ENCODE measurements at regions of chr5 and their contacts with region 1.

Region 1: GRCh38 chr5:68331192-68332079 is 115.9 kb downstream of the PIK3R1 start:
- DNase-seq: peak; percentile 93 to 98 (median 96)
- H3K4me3 ChIP-seq: peak overlapping the region in 2 of 3 experiments; percentile 5 to 50
- H3K4me3 Mint-ChIP-seq: peak overlapping the region; percentile 54 to 82
- H3K27ac ChIP-seq: peak overlapping the region; percentile 86 to 99
- H3K27ac Mint-ChIP-seq: peak overlapping the region; percentile 96 to 99 (median 98)
- H3K4me1 ChIP-seq: peaks cover 40 to 46% of the 10 kb centered on the region in 2 donors
- H3K4me1 Mint-ChIP-seq: peaks cover 42% of the 10 kb centered on the region
- H3K27me3 ChIP-seq: no peaks in the 10 kb centered on the region
- H3K27me3 Mint-ChIP-seq: peaks cover 0 to 5% (median under 1%) of the 10 kb centered on the region in 3 donors
- CTCF ChIP-seq: no peak

Region 2: GRCh38 chr5:67133776-67134175 is 1197.7 kb before region 1 on chr5:
- intact Hi-C with region 1: no loop called
- DNase-seq: no peak
- H3K4me3 ChIP-seq: no peak overlapping the region
- H3K4me3 Mint-ChIP-seq: no peak overlapping the region
- H3K27ac ChIP-seq: no peak overlapping the region
- H3K27ac Mint-ChIP-seq: no peak overlapping the region
- H3K4me1 ChIP-seq: no peaks in the 10 kb centered on the region
- H3K4me1 Mint-ChIP-seq: peaks cover 2% of the 10 kb centered on the region
- H3K27me3 ChIP-seq: no peaks in the 10 kb centered on the region
- H3K27me3 Mint-ChIP-seq: no peaks in the 10 kb centered on the region
- CTCF ChIP-seq: no peak

Region 3: GRCh38 chr5:68433923-68434879 is 102.8 kb after region 1 on chr5:
- intact Hi-C with region 1: loop called (anchors 2 kb)
- DNase-seq: peak; percentile 98 to 100 (median 99)
- H3K4me3 ChIP-seq: peak overlapping the region in 1 of 3 experiments; percentile 5
- H3K4me3 Mint-ChIP-seq: peak overlapping the region; percentile 62 to 76
- H3K27ac ChIP-seq: peak overlapping the region; percentile 97 to 99
- H3K27ac Mint-ChIP-seq: peak overlapping the region; percentile 95 to 99 (median 98)
- H3K4me1 ChIP-seq: peaks cover 41 to 43% of the 10 kb centered on the region in 2 donors
- H3K4me1 Mint-ChIP-seq: peaks cover 43% of the 10 kb centered on the region
- H3K27me3 ChIP-seq: no peaks in the 10 kb centered on the region
- H3K27me3 Mint-ChIP-seq: peaks cover 0 to 3% (median 0%) of the 10 kb centered on the region in 3 donors
- CTCF ChIP-seq: no peak

Measured in CD14-positive monocyte (primary cell).